ENCODE measurements at regions of chr4 and their contacts with region 1.

Region 1: DNA sequence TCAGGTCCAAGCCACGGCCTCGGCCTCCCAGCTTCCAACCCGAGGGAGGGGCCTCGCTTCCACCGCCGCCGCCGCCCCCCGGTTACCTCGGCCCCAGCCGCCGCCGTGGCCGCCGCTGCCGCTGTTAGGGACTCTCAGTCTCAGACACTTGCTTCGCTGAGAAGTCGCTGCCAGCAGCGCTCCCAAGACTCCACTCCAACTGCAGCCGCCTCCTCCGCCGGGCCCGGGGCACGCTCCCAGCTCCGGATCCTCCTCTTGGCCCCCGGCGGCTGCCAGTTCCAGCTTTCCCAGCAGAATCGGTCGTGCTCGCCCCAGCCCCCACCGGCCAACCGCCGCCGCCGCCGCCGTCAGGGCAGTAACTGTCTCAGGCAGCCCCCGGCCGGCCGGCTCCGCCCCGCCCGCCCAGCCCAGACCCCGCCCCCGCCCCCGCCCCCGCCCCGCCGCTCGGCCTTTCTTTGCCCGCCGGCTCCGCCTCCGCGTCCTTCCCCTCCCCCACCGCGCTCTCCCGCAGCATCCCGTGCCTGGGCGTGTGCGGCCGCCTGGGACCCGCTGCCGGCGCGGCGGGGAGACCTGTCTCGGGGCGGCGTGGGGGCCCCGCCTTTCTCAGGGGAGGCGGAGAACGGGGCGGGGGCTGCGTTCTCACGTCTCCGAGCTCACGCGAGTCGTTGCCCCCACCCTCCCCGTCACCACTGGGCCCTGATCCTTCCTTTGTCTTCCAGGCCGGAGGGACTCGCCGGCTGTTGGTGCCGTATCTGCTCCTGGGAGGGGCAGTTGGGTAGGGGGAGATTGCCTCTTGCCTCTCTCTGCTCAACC is at the start of gene ANKRD50:
- DNase-seq: peak; percentile 66 to 88
- H3K4me3 ChIP-seq: peak within 1 kb of the TSS; percentile 92
- H3K27ac ChIP-seq: peak within 1 kb of the TSS; percentile 68
- H3K4me1 ChIP-seq: peaks cover 25% of the 10 kb centered on the region
- H3K27me3 ChIP-seq: no peaks in the 10 kb centered on the region
- CTCF ChIP-seq: 0 out of 2 replicates have a peak, but pooled peaks have one; percentile 5
- total RNA-seq, gene ANKRD50: 14.4 and 17.2 TPM in 2 replicates

Region 2: DNA sequence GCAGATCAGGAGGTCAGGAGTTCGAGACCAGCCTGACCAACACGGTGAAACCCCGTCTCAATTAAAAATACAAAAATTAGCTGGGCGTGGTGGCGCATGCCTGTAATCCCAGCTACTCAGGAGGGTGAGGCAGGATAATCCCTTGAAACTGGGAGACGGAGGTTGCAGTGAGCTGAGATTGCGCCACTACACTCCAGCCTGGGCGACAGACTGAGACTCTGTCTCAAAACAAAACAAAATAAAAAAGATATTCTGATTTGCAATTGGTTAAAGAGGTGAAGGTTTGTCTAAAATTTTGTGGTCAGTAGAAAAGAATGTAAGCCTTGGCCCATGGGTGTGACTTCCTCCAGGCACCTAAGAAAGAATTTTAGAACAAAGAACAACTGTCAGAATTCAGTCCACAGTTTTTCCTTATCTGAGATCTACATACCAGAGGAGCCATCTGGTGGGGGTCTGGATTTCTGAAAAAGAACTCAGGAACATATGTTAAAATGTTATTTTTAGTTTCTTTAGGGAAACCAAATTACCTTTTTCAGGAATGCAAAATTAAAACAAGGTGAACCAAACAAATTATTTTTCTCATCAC is 434.2 kb before region 1 on chr4:
- CTCF ChIA-PET with region 1: no interaction called
- POLR2A ChIA-PET with region 1: no interaction called
- intact Hi-C with region 1: loop called (anchors 2 kb)
- DNase-seq: peak; percentile 35 to 63
- H3K4me3 ChIP-seq: no peak overlapping the region
- H3K27ac ChIP-seq: no peak overlapping the region; the same call in 1 of the 2 replicates
- H3K4me1 ChIP-seq: peaks cover 5% of the 10 kb centered on the region; the same call in 1 of the 2 replicates
- H3K27me3 ChIP-seq: no peaks in the 10 kb centered on the region
- CTCF ChIP-seq: no peak

Region 3: DNA sequence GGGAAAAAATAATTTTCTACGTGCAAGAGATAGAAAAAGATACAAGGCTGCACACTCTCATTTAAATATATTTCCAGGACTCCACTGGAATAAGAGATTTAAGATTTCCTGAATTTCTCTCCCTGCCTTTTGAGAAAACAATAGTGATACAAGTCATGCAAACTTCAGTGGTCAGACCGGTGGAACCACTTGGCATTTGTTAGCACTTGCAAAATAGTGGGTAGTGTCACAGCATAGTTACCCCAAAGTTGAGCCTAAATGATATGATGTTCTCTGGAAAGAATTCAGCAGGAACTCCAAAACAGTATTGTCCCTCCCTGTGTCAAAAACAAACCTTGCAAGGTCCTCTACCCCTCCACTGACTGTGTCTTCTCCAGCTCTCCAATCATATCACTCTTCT is 102.4 kb before region 1 on chr4:
- CTCF ChIA-PET with region 1: no interaction called
- POLR2A ChIA-PET with region 1: no interaction called
- intact Hi-C with region 1: loop called (anchors 5 kb)
- DNase-seq: peak; percentile 66 to 83
- H3K4me3 ChIP-seq: no peak overlapping the region
- H3K27ac ChIP-seq: peak overlapping the region; percentile 50
- H3K4me1 ChIP-seq: peaks cover 27% of the 10 kb centered on the region
- H3K27me3 ChIP-seq: no peaks in the 10 kb centered on the region
- CTCF ChIP-seq: no peak

Region 4: DNA sequence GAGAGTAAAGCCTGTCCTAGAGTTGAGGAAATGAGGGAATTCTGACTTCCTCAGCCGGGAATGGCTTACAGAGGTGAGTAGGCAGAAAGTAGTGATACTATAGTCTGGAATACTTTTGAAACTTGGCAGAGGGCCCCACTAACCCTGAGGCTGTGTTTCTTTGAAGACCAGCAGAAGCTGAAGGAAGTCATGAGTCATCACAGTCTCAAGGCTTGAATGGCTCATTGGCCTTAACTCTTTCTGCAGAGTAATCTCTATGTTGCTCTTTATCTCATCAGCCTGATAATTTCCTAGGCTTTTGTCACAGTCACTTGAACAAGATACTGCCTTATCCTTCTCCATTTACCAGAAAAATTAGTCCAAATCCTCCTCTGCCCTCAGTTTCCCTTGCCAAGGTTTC is 80.8 kb before region 1 on chr4:
- CTCF ChIA-PET with region 1: no interaction called
- POLR2A ChIA-PET with region 1: no interaction called
- intact Hi-C with region 1: no loop called
- DNase-seq: peak; percentile 84 to 96
- H3K4me3 ChIP-seq: no peak overlapping the region
- H3K27ac ChIP-seq: peak overlapping the region; percentile 82
- H3K4me1 ChIP-seq: peaks cover 26% of the 10 kb centered on the region
- H3K27me3 ChIP-seq: no peaks in the 10 kb centered on the region
- CTCF ChIP-seq: no peak

Region 5: GRCh38 chr4:124940387-124940786 is 227.8 kb after region 1 on chr4:
- CTCF ChIA-PET with region 1: no interaction called
- POLR2A ChIA-PET with region 1: no interaction called
- intact Hi-C with region 1: loop called (anchors 2 kb)
- DNase-seq: peak in 1 of 2 experiments; percentile 84
- H3K4me3 ChIP-seq: peak overlapping the region; percentile 26; the same call in 1 of the 2 replicates
- H3K27ac ChIP-seq: peak overlapping the region; percentile 89
- H3K4me1 ChIP-seq: peaks cover 42% of the 10 kb centered on the region
- H3K27me3 ChIP-seq: no peaks in the 10 kb centered on the region
- CTCF ChIP-seq: no peak

Region 6: GRCh38 chr4:125244848-125245450 is 532.4 kb after region 1 on chr4:
- CTCF ChIA-PET with region 1: no interaction called
- POLR2A ChIA-PET with region 1: no interaction called
- intact Hi-C with region 1: loop called (anchors 5 kb)
- DNase-seq: no peak
- H3K4me3 ChIP-seq: no peak overlapping the region
- H3K27ac ChIP-seq: no peak overlapping the region
- H3K4me1 ChIP-seq: no peaks in the 10 kb centered on the region
- H3K27me3 ChIP-seq: no peaks in the 10 kb centered on the region
- CTCF ChIP-seq: peak; percentile 73